K562 (cell line): ENCODE measurements at regions of chr4 and their contacts with region 1.

Region 1: DNA sequence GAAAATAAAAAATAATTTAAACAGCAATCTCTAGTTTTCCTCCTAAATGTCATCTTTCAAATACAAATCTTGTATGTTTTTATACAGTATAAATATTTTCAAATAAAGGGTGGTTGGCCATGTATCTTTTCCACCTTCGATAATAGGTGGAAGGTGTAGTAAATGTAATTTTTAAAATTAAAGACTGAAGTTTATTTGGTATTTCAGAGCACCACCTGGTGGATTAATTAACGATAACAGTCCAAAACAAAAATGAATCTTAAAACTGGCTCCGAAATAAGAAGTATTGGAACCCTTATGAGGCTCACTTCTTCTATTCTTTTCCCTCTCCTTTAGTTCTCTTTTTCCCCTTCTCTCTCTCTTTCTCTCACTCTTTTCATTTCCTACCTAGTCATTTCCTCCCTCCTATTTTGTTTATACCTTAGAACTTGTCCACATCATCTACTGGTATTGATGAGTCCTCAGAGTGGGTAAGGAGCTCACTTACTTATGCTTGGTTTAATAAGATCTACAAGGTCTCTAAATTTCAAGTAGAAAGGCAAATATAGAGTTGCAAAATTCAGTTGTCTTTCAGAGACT is 82.9 kb upstream of the EXOC1L start:
- DNase-seq: peak in 2 of 4 experiments; percentile 25 to 41
- ATAC-seq: peak; percentile 27; the same call in 2 of the 3 replicates
- H3K4me3 ChIP-seq: no peak overlapping the region
- H3K27ac ChIP-seq: no peak overlapping the region
- H3K4me1 ChIP-seq: peaks cover 15 to 24% of the 10 kb centered on the region in 2 experiments; a peak in 4 of 5 replicates
- H3K27me3 ChIP-seq: no peaks in the 10 kb centered on the region
- CTCF ChIP-seq: peak; percentile 22 to 76 (median 35); a peak in 3 of 6 replicates
- EP300 ChIP-seq: no peak
- POLR2A ChIP-seq: no peak
- RAD21 ChIP-seq: peak; percentile 86

Region 2: GRCh38 chr4:55008166-55009070 is 728.3 kb before region 1 on chr4:
- CTCF ChIA-PET with region 1: no interaction called
- POLR2A ChIA-PET with region 1: no interaction called
- in situ Hi-C with region 1: loop called (anchors 10 kb)
- intact Hi-C with region 1: no loop called
- DNase-seq: peak; percentile 26 to 68 (median 67)
- ATAC-seq: peak; percentile 94
- H3K4me3 ChIP-seq: no peak overlapping the region
- H3K27ac ChIP-seq: no peak overlapping the region
- H3K4me1 ChIP-seq: no peaks in the 10 kb centered on the region
- H3K27me3 ChIP-seq: no peaks in the 10 kb centered on the region
- CTCF ChIP-seq: peak; percentile 58 to 71 (median 63)
- EP300 ChIP-seq: no peak
- POLR2A ChIP-seq: no peak
- RAD21 ChIP-seq: peak; percentile 30 to 49; a peak in 3 of 4 replicates

Region 3: GRCh38 chr4:55157559-55158277 is 579.0 kb before region 1 on chr4:
- CTCF ChIA-PET with region 1: no interaction called
- POLR2A ChIA-PET with region 1: no interaction called
- in situ Hi-C with region 1: no loop called
- intact Hi-C with region 1: no loop called
- DNase-seq: no peak
- ATAC-seq: peak; percentile 62
- H3K4me3 ChIP-seq: no peak overlapping the region
- H3K27ac ChIP-seq: no peak overlapping the region
- H3K4me1 ChIP-seq: peaks cover 0 to 5% of the 10 kb centered on the region in 2 experiments; a peak in 3 of 5 replicates
- H3K27me3 ChIP-seq: peaks cover 9% of the 10 kb centered on the region in 2 experiments; a peak in 3 of 5 replicates
- CTCF ChIP-seq: no peak
- EP300 ChIP-seq: no peak
- POLR2A ChIP-seq: no peak
- RAD21 ChIP-seq: no peak

Region 4: DNA sequence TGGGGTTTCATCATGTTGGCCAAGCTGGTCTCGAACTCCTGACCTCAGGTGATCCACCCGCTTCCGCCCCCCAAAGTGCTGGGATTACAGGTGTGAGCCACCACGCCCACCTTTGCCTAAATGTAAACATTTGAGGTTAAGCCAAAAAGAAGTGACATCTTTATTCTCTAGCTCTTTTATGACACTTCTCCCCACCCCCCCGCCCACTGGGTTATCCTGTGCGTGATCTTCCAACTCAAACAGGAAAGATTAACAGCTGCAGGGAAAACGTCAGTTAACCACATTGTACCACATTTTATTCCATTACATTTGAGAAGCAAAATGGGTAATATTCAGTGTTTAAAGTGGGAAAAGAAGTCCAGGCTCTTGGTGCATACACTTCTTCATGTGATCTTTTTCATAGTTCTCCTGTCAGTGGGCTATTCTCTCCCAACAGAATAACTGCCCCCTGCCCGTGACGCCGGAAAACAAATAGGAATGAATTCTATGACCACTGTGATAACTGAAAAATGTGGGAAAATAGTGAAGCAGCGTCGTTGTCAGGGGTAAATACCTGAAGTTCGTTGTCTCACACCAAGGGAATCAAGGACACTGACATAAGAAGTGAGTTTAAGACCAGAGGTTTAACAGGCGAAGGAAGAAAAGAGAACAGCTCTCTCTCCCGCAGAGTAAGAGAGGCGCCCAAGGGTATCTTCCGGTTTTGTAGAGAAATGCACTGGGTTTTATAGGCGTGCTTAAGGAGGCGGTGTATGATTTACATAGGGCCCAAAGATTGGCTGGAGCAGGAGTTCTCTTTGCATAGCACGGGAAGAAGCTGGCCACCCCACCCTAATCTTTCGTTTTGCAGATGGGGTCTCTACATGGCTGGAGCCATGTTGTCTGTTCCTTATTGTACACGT is 400.3 kb before region 1 on chr4:
- CTCF ChIA-PET with region 1: no interaction called
- POLR2A ChIA-PET with region 1: no interaction called
- in situ Hi-C with region 1: loop called (anchors 10 kb)
- intact Hi-C with region 1: no loop called
- DNase-seq: peak in 2 of 4 experiments; percentile 27 to 42
- ATAC-seq: peak; percentile 95
- H3K4me3 ChIP-seq: no peak overlapping the region
- H3K27ac ChIP-seq: peak overlapping the region; percentile 33; the same call in 2 of the 3 replicates
- H3K4me1 ChIP-seq: peaks cover 0 to 3% of the 10 kb centered on the region in 2 experiments; a peak in 1 of 5 replicates
- H3K27me3 ChIP-seq: no peaks in the 10 kb centered on the region
- CTCF ChIP-seq: no peak
- EP300 ChIP-seq: no peak
- POLR2A ChIP-seq: peak; percentile 53; the same call in 1 of the 2 replicates
- RAD21 ChIP-seq: no peak

Region 5: GRCh38 chr4:55444827-55445226 is 291.9 kb before region 1 on chr4:
- CTCF ChIA-PET with region 1: interaction called, 5 read pairs
- POLR2A ChIA-PET with region 1: no interaction called
- in situ Hi-C with region 1: loop called (anchors 10 kb)
- intact Hi-C with region 1: loop called (anchors 5 kb)
- DNase-seq: peak in 2 of 4 experiments; percentile 15 to 22
- ATAC-seq: peak; percentile 52; the same call in 2 of the 3 replicates
- H3K4me3 ChIP-seq: no peak overlapping the region
- H3K27ac ChIP-seq: no peak overlapping the region
- H3K4me1 ChIP-seq: no peaks in the 10 kb centered on the region
- H3K27me3 ChIP-seq: no peaks in the 10 kb centered on the region
- CTCF ChIP-seq: peak; percentile 37 to 58 (median 38); a peak in 5 of 6 replicates
- EP300 ChIP-seq: no peak
- POLR2A ChIP-seq: no peak
- RAD21 ChIP-seq: peak; percentile 45 to 60

Region 6: DNA sequence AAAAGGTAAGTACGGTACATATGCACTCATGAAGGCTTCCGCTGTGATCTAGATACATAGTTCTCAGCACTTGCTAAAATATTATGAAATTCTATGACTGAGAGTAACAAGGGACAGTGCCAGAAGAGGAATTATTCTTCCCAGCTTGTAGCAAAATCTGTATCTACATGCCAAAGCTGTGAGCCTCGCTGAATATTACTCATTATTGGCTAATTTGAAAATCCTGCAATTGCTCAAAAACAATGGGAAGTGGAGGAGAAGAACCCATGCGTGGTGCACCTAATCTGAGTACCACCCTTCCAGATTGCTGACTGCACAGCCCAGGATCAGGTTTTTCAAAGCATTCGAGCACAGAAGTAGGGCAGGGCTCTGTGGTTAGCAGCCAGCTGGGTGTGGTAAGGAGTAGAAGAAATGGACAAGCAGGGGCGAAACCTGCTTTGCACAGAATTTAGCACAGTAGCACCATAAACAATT is 127.3 kb before region 1 on chr4:
- CTCF ChIA-PET with region 1: no interaction called
- POLR2A ChIA-PET with region 1: interaction called, 3 read pairs
- in situ Hi-C with region 1: loop called (anchors 10 kb)
- intact Hi-C with region 1: no loop called
- DNase-seq: no peak
- ATAC-seq: no peak
- H3K4me3 ChIP-seq: no peak overlapping the region
- H3K27ac ChIP-seq: no peak overlapping the region
- H3K4me1 ChIP-seq: no peaks in the 10 kb centered on the region; a peak in 2 of 5 replicates
- H3K27me3 ChIP-seq: no peaks in the 10 kb centered on the region
- CTCF ChIP-seq: no peak
- EP300 ChIP-seq: no peak
- POLR2A ChIP-seq: 0 out of 2 replicates have a peak, but pooled peaks have one; percentile 20
- RAD21 ChIP-seq: no peak

Region 7: DNA sequence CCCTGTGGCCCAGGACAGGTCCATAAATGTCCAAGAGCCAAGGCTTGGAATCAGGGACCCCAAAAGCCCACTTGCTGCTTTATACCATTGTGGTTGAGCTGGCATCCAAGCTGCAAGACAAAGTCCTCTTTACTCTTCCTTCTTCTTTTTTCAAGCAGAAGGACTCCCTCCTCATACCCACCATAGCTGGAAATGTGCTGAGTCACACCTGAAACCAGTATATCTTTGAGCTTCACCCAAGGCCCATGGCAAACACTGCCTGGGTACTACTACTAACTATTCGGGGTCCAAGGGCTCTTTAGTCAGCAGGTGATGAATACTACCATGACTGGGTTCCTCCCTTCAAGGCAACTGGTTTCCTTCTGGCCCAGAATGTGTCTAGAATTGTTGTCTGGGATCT is 63.3 kb before region 1 on chr4:
- CTCF ChIA-PET with region 1: no interaction called
- POLR2A ChIA-PET with region 1: no interaction called
- in situ Hi-C with region 1: no loop called
- intact Hi-C with region 1: loop called (anchors 5 kb)
- DNase-seq: peak in 1 of 4 experiments; percentile 35
- ATAC-seq: no peak
- H3K4me3 ChIP-seq: no peak overlapping the region
- H3K27ac ChIP-seq: no peak overlapping the region; the same call in 1 of the 3 replicates
- H3K4me1 ChIP-seq: peaks cover 2 to 27% of the 10 kb centered on the region in 2 experiments; a peak in 4 of 5 replicates
- H3K27me3 ChIP-seq: no peaks in the 10 kb centered on the region
- CTCF ChIP-seq: no peak
- EP300 ChIP-seq: no peak
- POLR2A ChIP-seq: no peak
- RAD21 ChIP-seq: no peak

Region 8: DNA sequence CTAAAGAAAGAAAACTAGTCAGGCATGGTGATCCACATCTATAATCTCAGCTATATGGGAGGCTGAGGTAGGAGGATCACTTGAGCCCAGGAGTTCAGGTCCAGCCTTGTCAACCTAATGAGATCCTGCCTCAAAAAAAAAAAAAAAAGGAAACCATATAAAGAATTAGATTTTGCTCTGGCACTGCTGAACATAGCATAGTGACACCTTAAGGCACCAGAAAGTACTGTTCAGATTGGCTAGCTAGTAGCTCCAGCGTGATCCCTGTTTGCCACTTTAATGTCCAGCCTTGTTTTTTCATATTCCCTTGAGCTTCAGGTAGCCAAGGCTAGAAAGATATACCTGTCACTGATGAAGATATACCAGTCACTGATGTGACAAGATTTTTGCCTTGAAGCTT is 150.9 kb after region 1 on chr4:
- CTCF ChIA-PET with region 1: no interaction called
- POLR2A ChIA-PET with region 1: no interaction called
- in situ Hi-C with region 1: no loop called
- intact Hi-C with region 1: no loop called
- DNase-seq: peak in 1 of 4 experiments; percentile 8
- ATAC-seq: peak; percentile 69
- H3K4me3 ChIP-seq: no peak overlapping the region
- H3K27ac ChIP-seq: no peak overlapping the region
- H3K4me1 ChIP-seq: peaks cover 0 to 15% of the 10 kb centered on the region in 2 experiments; a peak in 3 of 5 replicates
- H3K27me3 ChIP-seq: no peaks in the 10 kb centered on the region
- CTCF ChIP-seq: 0 out of 6 replicates have a peak, but pooled peaks of 1 of the 3 experiments have one; percentile 17
- EP300 ChIP-seq: no peak
- POLR2A ChIP-seq: no peak
- RAD21 ChIP-seq: no peak